ENCODE measurements at regions of chr16 and their contacts with region 1.

Region 1: DNA sequence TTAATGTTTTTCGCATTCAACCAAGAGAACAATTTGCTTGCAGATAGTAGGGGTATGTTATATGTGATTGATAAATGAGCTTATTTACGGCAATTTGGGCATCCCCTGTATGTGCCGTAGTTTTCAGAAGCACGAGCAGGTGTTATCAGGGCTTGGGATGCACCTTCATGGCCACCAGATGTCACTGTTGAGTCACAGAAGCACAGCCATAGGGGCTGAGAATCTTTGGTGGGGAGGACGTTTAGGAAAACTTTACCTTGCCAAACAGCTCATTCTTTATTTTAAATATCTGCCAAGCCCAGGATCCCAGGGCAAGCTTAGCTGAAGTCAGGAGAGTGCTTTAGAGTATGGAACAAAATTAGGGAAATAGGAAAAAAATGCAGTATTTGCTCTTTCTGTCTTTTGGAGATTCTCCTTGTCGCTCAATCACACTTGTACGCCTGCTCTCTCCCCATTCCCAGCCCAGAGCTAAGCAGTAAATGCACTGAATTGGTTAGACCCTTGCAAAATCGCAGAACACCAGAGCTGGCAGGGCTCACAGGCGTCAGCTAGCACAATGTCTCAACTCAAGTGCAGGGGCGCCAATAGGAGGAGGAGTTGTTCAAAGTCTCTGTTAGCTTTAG is 93.6 kb upstream of the MPHOSPH6 start:
- DNase-seq: peak; percentile 50 to 77
- H3K4me3 ChIP-seq: no peak overlapping the region
- H3K27ac ChIP-seq: peak overlapping the region; percentile 47 to 48
- H3K4me1 ChIP-seq: peaks cover 0 to 25% (median 12%) of the 10 kb centered on the region in 4 donors
- H3K27me3 ChIP-seq: no peaks in the 10 kb centered on the region
- CTCF ChIP-seq: peak; percentile 88 to 95

Region 2: GRCh38 chr16:82344157-82344556 is 80.5 kb after region 1 on chr16:
- intact Hi-C with region 1: loop called (anchors 5 kb)
- DNase-seq: no peak
- H3K4me3 ChIP-seq: no peak overlapping the region
- H3K27ac ChIP-seq: no peak overlapping the region
- H3K4me1 ChIP-seq: no peaks in the 10 kb centered on the region
- H3K27me3 ChIP-seq: no peaks in the 10 kb centered on the region
- CTCF ChIP-seq: peak; percentile 50 to 61

Region 3: DNA sequence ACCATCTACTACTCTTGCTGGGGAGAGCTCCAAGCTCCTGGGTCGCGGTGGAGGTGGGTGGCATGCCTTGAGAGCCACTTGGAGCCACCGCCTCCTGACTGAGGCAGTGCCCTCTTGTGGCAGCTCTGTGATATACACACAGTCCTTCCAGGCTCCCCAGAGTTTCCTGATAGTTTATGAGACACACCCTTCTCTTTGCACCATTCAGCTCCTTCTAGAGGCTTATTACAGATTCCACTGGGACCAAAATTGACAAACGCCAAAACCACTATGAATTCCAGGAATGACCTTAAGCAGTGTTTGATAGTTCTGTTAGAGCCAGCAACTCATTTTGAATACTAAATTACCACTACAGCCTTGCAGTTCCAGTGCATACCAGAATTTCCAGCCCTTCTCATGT is 193.1 kb after region 1 on chr16:
- intact Hi-C with region 1: loop called (anchors 10 kb)
- DNase-seq: peak; percentile 40 to 75
- H3K4me3 ChIP-seq: no peak overlapping the region
- H3K27ac ChIP-seq: no peak overlapping the region
- H3K4me1 ChIP-seq: peaks cover 0 to 7% (median 2%) of the 10 kb centered on the region in 4 donors
- H3K27me3 ChIP-seq: no peaks in the 10 kb centered on the region
- CTCF ChIP-seq: peak; percentile 62 to 78

Region 4: GRCh38 chr16:82580298-82580890 is 316.8 kb after region 1 on chr16:
- intact Hi-C with region 1: loop called (anchors 5 kb)
- DNase-seq: no peak
- H3K4me3 ChIP-seq: no peak overlapping the region
- H3K27ac ChIP-seq: no peak overlapping the region
- H3K4me1 ChIP-seq: no peaks in the 10 kb centered on the region
- H3K27me3 ChIP-seq: no peaks in the 10 kb centered on the region
- CTCF ChIP-seq: peak; percentile 36 to 50

Measured in tibial artery (tissue), 4 donors.